Activated naive CD4-positive, alpha-beta T cell treated with anti-CD3 and anti-CD28 coated beads for 36 hours (primary cell): ENCODE measurements at regions of chr19 and their contacts with region 1.

Region 1: GRCh38 chr19:47243776-47244547 is 12.4 kb upstream of the CCDC9 start:
- DNase-seq: peak; percentile 95
- H3K4me3 Mint-ChIP-seq: peak overlapping the region; percentile 97
- H3K27ac Mint-ChIP-seq: peak overlapping the region; percentile 97
- H3K4me1 Mint-ChIP-seq: peaks cover 34% of the 10 kb centered on the region
- H3K27me3 Mint-ChIP-seq: no peaks in the 10 kb centered on the region

Region 2: GRCh38 chr19:47035127-47036096 is 208.6 kb before region 1 on chr19:
- CTCF ChIA-PET with region 1: interaction called, 6 read pairs
- intact Hi-C with region 1: loop called (anchors 1 kb)
- DNase-seq: peak; percentile 97
- H3K4me3 Mint-ChIP-seq: peak overlapping the region; percentile 81
- H3K27ac Mint-ChIP-seq: peak overlapping the region; percentile 43
- H3K4me1 Mint-ChIP-seq: peaks cover 19% of the 10 kb centered on the region
- H3K27me3 Mint-ChIP-seq: peaks cover 8% of the 10 kb centered on the region

Region 3: DNA sequence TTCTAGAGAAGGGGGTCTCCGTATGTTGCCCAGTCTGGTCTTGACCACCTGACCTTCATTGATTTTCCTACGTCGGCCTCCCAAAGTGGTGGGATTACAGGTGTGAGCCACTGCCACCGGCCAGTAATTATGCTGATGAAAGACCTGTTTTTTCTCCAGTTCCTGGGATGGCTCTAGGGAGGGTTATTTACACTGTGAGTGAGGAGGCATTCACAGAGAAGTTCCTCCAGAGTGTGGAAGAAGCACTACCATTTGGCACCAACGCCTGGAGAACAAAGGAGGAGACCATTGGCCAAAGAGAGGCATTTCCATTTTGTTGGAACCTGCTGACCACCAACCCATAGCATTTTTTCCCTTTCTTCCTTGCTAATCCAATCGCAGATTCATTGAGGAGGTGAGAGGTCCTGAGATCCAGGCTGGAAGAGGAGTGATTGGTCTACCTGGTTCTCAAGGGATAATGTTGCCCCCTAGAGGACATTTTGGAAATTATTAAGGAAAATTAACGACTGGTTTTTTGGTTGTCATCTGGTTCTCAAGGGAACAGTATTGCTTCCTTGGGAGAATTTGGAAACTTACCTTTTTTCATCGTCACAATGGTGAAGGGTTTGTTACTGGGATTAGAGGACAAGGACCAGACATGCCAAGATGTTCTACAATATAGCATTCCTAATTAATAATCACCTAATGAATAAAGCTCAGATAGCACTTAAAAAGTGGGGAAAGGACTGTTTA is 118.9 kb before region 1 on chr19:
- CTCF ChIA-PET with region 1: interaction called, 10 read pairs
- intact Hi-C with region 1: loop called (anchors 1 kb)
- DNase-seq: no peak
- H3K4me3 Mint-ChIP-seq: no peak overlapping the region
- H3K27ac Mint-ChIP-seq: no peak overlapping the region
- H3K4me1 Mint-ChIP-seq: peaks cover 5% of the 10 kb centered on the region
- H3K27me3 Mint-ChIP-seq: no peaks in the 10 kb centered on the region

Region 4: DNA sequence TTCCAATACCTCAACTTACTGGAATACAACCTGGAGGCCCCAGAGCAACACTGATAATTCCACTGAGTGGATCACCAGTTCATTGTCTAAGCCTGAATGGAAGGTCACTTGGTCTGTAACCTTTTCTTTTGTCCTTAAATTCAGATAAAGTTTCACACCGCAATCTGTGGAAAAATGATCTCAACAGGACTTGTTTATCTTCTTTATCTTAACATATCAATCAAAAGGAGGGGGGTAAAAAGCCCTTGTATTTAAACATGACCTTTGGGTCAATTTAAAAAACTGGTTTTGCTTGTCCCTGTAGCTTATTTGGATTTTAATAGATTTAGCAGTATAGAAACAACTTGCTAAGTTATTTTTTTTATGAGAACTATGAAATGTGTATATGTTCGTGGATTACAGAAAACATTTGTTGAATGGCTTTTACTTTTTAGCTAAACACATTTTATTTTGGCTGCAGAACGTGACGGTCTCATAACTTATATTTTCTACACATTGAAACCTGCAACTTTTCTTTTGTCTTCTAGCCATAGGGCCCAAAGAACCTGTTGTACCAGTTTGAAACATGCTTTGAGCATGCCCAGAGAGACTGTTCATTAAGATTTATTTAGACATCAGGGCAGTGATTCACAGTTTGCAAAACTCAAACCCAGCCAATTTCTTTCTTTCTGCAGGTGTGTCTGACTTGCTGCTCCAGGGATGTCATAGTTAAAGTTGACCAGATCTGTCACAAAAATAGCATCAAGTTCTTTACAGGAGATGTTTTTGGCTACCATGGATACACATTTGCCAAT is 91.5 kb before region 1 on chr19:
- CTCF ChIA-PET with region 1: interaction called, 67 read pairs
- intact Hi-C with region 1: loop called (anchors 1 kb)
- DNase-seq: no peak
- H3K4me3 Mint-ChIP-seq: no peak overlapping the region
- H3K27ac Mint-ChIP-seq: peak overlapping the region; percentile 30
- H3K4me1 Mint-ChIP-seq: peaks cover 60% of the 10 kb centered on the region
- H3K27me3 Mint-ChIP-seq: no peaks in the 10 kb centered on the region

Region 5: DNA sequence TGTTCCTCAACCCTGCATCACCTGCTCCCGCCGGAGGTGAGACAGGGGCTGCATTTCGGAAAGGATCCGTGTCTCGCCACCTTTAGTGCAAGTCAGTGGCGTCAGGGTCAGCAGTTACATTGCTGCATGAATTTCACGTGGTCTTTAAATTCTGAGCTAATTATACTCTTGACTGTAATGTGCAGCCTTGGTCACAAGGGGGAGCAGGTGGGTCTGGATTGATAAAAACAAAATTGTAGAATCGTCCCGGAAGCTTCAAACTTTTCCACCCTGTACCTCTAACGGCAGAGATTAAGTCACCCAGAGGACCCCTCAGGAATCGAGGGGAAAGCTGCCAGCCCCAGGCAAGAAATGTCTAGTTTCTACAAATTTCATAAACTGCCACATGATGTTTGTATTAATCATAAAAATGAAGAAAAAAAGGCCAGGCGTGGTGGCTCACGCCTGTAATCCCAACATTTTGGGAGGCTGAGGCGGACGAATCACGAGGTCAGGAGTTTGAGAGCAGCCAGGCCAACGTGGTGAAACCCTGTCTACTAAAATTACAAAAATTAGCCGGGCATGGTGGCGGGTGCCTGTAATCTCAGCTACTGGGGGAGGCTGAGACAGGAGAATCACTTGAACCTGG is 33.2 kb before region 1 on chr19:
- CTCF ChIA-PET with region 1: interaction called, 189 read pairs
- intact Hi-C with region 1: loop called (anchors 1 kb)
- DNase-seq: peak; percentile 94
- H3K4me3 Mint-ChIP-seq: no peak overlapping the region
- H3K27ac Mint-ChIP-seq: peak overlapping the region; percentile 93
- H3K4me1 Mint-ChIP-seq: peaks cover 14% of the 10 kb centered on the region
- H3K27me3 Mint-ChIP-seq: no peaks in the 10 kb centered on the region

Region 6: GRCh38 chr19:47231215-47231984 is 12.6 kb before region 1 on chr19:
- CTCF ChIA-PET with region 1: interaction called, 49 read pairs
- intact Hi-C with region 1: loop called (anchors 1 kb)
- DNase-seq: peak; percentile 95
- H3K4me3 Mint-ChIP-seq: peak overlapping the region; percentile 77
- H3K27ac Mint-ChIP-seq: peak overlapping the region; percentile 87
- H3K4me1 Mint-ChIP-seq: peaks cover 22% of the 10 kb centered on the region
- H3K27me3 Mint-ChIP-seq: no peaks in the 10 kb centered on the region

Region 7: GRCh38 chr19:47273313-47273977 is 29.5 kb after region 1 on chr19:
- CTCF ChIA-PET with region 1: interaction called, 8 read pairs
- intact Hi-C with region 1: loop called (anchors 1 kb)
- DNase-seq: peak; percentile 90
- H3K4me3 Mint-ChIP-seq: peak overlapping the region; percentile 96
- H3K27ac Mint-ChIP-seq: peak overlapping the region; percentile 97
- H3K4me1 Mint-ChIP-seq: peaks cover 22% of the 10 kb centered on the region
- H3K27me3 Mint-ChIP-seq: no peaks in the 10 kb centered on the region

Region 8: GRCh38 chr19:47414469-47414868 is 170.5 kb after region 1 on chr19:
- CTCF ChIA-PET with region 1: no interaction called
- intact Hi-C with region 1: no loop called
- DNase-seq: no peak
- H3K4me3 Mint-ChIP-seq: no peak overlapping the region
- H3K27ac Mint-ChIP-seq: no peak overlapping the region
- H3K4me1 Mint-ChIP-seq: peaks cover 15% of the 10 kb centered on the region
- H3K27me3 Mint-ChIP-seq: peaks cover 40% of the 10 kb centered on the region